ENCODE measurements at regions of chr12 and their contacts with region 1.

Region 1: GRCh38 chr12:8662593-8662992 is at the start of gene MFAP5:
- DNase-seq: no peak
- H3K4me3 ChIP-seq: no peak within 1 kb of the TSS
- H3K27ac ChIP-seq: no peak within 1 kb of the TSS
- H3K4me1 ChIP-seq: no peaks in the 10 kb centered on the region
- H3K27me3 ChIP-seq: peaks cover 2 to 9% of the 10 kb centered on the region in 2 experiments
- CTCF ChIP-seq: no peak
- POLR2A ChIP-seq: no peak
- total RNA-seq, gene MFAP5: not detected in 2 replicates

Region 2: GRCh38 chr12:8553088-8553627 is 109.4 kb before region 1 on chr12:
- CTCF ChIA-PET with region 1: no interaction called
- POLR2A ChIA-PET with region 1: no interaction called
- dilution Hi-C with region 1: no loop called
- intact Hi-C with region 1: no loop called
- DNase-seq: no peak
- H3K4me3 ChIP-seq: no peak overlapping the region
- H3K27ac ChIP-seq: no peak overlapping the region
- H3K4me1 ChIP-seq: peaks cover 15% of the 10 kb centered on the region
- H3K27me3 ChIP-seq: no peaks in the 10 kb centered on the region
- CTCF ChIP-seq: no peak
- POLR2A ChIP-seq: no peak

Region 3: GRCh38 chr12:8644345-8645248 is 18.0 kb before region 1 on chr12:
- CTCF ChIA-PET with region 1: interaction called, 33 read pairs
- POLR2A ChIA-PET with region 1: no interaction called
- dilution Hi-C with region 1: no loop called
- intact Hi-C with region 1: no loop called
- DNase-seq: no peak
- H3K4me3 ChIP-seq: no peak overlapping the region
- H3K27ac ChIP-seq: no peak overlapping the region
- H3K4me1 ChIP-seq: no peaks in the 10 kb centered on the region
- H3K27me3 ChIP-seq: peaks cover 0 to 8% of the 10 kb centered on the region in 2 experiments
- CTCF ChIP-seq: no peak
- POLR2A ChIP-seq: no peak

Region 4: GRCh38 chr12:8697476-8698131 is 35.0 kb after region 1 on chr12 and contains the start of gene RIMKLB:
- CTCF ChIA-PET with region 1: interaction called, 12 read pairs
- POLR2A ChIA-PET with region 1: interaction called, 4 read pairs
- dilution Hi-C with region 1: no loop called
- intact Hi-C with region 1: no loop called
- DNase-seq: peak; percentile 78
- H3K4me3 ChIP-seq: peak within 1 kb of the TSS; percentile 58 to 90 (median 87)
- H3K27ac ChIP-seq: peak within 1 kb of the TSS; percentile 83
- H3K4me1 ChIP-seq: peaks cover 30% of the 10 kb centered on the region
- H3K27me3 ChIP-seq: no peaks in the 10 kb centered on the region
- CTCF ChIP-seq: no peak
- POLR2A ChIP-seq: no peak
- total RNA-seq, gene RIMKLB: 64.3 and 92.6 TPM in 2 replicates

Region 5: GRCh38 chr12:8860165-8860961 is 197.8 kb after region 1 on chr12:
- CTCF ChIA-PET with region 1: interaction called, 167 read pairs
- POLR2A ChIA-PET with region 1: no interaction called
- dilution Hi-C with region 1: no loop called
- intact Hi-C with region 1: loop called (anchors 1 kb)
- DNase-seq: peak; percentile 59
- H3K4me3 ChIP-seq: no peak overlapping the region
- H3K27ac ChIP-seq: no peak overlapping the region
- H3K4me1 ChIP-seq: no peaks in the 10 kb centered on the region
- H3K27me3 ChIP-seq: no peaks in the 10 kb centered on the region
- CTCF ChIP-seq: peak; percentile 66 to 70
- POLR2A ChIP-seq: no peak

Region 6: DNA sequence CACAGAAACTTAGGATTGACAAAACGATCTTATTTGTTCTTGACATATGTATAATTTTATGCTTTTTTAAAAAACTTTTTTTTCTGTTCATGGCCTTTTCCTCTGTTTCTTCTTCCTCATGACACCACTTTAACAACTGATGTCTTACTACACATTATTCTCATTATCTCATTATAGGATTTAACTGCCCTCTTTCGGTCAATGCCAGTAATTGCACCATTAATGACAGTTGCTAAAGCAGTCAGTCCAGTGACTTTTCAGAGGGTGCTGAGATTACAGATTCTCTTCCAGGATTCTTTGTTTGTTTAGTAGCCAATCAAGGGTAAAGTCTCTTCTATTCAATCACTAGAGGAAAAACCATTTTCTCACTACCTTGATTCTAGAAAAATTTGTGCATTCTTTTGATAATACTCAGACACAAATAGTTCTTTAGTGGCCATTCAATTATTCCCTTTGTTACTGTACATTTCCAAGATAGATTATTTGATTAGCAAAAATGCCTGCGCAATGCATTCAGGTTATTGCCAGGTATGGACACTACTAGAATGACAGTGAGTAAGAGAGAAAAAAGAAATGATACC is 376.9 kb after region 1 on chr12:
- CTCF ChIA-PET with region 1: interaction called, 24 read pairs
- POLR2A ChIA-PET with region 1: no interaction called
- dilution Hi-C with region 1: no loop called
- intact Hi-C with region 1: loop called (anchors 1 kb)
- DNase-seq: peak; percentile 63
- H3K4me3 ChIP-seq: no peak overlapping the region
- H3K27ac ChIP-seq: no peak overlapping the region
- H3K4me1 ChIP-seq: no peaks in the 10 kb centered on the region
- H3K27me3 ChIP-seq: peaks cover 7 to 8% of the 10 kb centered on the region in 2 experiments
- CTCF ChIP-seq: peak; percentile 47 to 54
- POLR2A ChIP-seq: no peak